ENCODE measurements at regions of chr1 and their contacts with region 1.

Region 1: GRCh38 chr1:172390683-172391551 is 29.6 kb upstream of the C1orf105 start:
- DNase-seq: peak in 1 of 2 donors; percentile 79
- ATAC-seq: peak; percentile 39
- H3K4me3 ChIP-seq: peak overlapping the region; percentile 33 to 84
- H3K27ac ChIP-seq: peak overlapping the region; percentile 7 to 76
- H3K4me1 ChIP-seq: peaks cover 0 to 6% of the 10 kb centered on the region in 2 donors
- H3K27me3 ChIP-seq: no peaks in the 10 kb centered on the region

Region 2: DNA sequence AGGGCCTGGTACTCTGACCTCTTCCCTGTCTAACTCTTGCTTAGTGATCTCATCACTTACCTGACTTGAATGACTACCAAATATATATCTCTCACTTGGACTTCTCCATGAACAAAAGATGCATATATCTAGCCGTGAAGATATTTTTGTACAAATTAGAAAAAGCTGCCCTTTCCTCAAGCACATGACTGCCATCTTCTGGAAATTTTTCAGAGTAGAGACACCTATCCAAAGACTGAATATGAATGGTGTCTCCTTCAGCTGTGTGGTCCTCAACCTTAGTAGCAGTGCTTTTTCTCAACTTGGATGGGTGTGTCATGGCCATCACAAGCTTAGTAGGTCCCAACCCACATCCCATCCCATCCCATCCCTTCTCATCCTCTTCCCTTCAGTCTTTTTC is 407.3 kb before region 1 on chr1:
- intact Hi-C with region 1: no loop called
- DNase-seq: no peak
- ATAC-seq: peak; percentile 33
- H3K4me3 ChIP-seq: no peak overlapping the region
- H3K27ac ChIP-seq: no peak overlapping the region
- H3K4me1 ChIP-seq: no peaks in the 10 kb centered on the region
- H3K27me3 ChIP-seq: no peaks in the 10 kb centered on the region

Region 3: GRCh38 chr1:172357753-172358385 is 33.0 kb before region 1 on chr1:
- intact Hi-C with region 1: loop called in 1 of 2 experiments (anchors 2 kb)
- DNase-seq: no peak
- ATAC-seq: no peak
- H3K4me3 ChIP-seq: peak overlapping the region; percentile 26 to 41
- H3K27ac ChIP-seq: peak overlapping the region; percentile 76 to 88
- H3K4me1 ChIP-seq: peaks cover 0 to 2% of the 10 kb centered on the region in 2 donors
- H3K27me3 ChIP-seq: no peaks in the 10 kb centered on the region